ENCODE measurements at regions of chr2 and their contacts with region 1.

Region 1: GRCh38 chr2:168118733-168119514 is 128.5 kb downstream of the STK39 start:
- DNase-seq: no peak
- H3K4me3 ChIP-seq: no peak overlapping the region
- H3K27ac ChIP-seq: peak overlapping the region in 2 of 4 donors; percentile 13 to 28
- H3K4me1 ChIP-seq: peaks cover 8 to 14% (median 13%) of the 10 kb centered on the region in 4 donors
- H3K27me3 ChIP-seq: no peaks in the 10 kb centered on the region
- CTCF ChIP-seq: peak; percentile 64 to 66 (median 64)
- EP300 ChIP-seq: no peak
- POLR2A ChIP-seq: no peak

Region 2: GRCh38 chr2:166539340-166540162 is 1579.4 kb before region 1 on chr2:
- intact Hi-C with region 1: loop called (anchors 5 kb)
- DNase-seq: no peak
- H3K4me3 ChIP-seq: no peak overlapping the region
- H3K27ac ChIP-seq: no peak overlapping the region
- H3K4me1 ChIP-seq: peaks cover 0 to 7% (median 5%) of the 10 kb centered on the region in 4 donors
- H3K27me3 ChIP-seq: no peaks in the 10 kb centered on the region
- CTCF ChIP-seq: peak; percentile 53 to 84 (median 68)
- EP300 ChIP-seq: no peak
- POLR2A ChIP-seq: no peak

Region 3: GRCh38 chr2:167706800-167707199 is 412.1 kb before region 1 on chr2:
- intact Hi-C with region 1: no loop called
- DNase-seq: no peak
- H3K4me3 ChIP-seq: no peak overlapping the region
- H3K27ac ChIP-seq: no peak overlapping the region
- H3K4me1 ChIP-seq: no peaks in the 10 kb centered on the region
- H3K27me3 ChIP-seq: no peaks in the 10 kb centered on the region
- CTCF ChIP-seq: no peak
- EP300 ChIP-seq: no peak
- POLR2A ChIP-seq: no peak

Region 4: GRCh38 chr2:167966937-167967913 is 151.7 kb before region 1 on chr2:
- intact Hi-C with region 1: loop called (anchors 2 kb)
- DNase-seq: no peak
- H3K4me3 ChIP-seq: peak overlapping the region in 1 of 4 donors; percentile 8
- H3K27ac ChIP-seq: peak overlapping the region; percentile 53 to 69 (median 65)
- H3K4me1 ChIP-seq: peaks cover 0 to 36% (median 26%) of the 10 kb centered on the region in 4 donors
- H3K27me3 ChIP-seq: no peaks in the 10 kb centered on the region
- CTCF ChIP-seq: peak in 1 of 3 experiments; percentile 9
- EP300 ChIP-seq: no peak
- POLR2A ChIP-seq: no peak

Region 5: DNA sequence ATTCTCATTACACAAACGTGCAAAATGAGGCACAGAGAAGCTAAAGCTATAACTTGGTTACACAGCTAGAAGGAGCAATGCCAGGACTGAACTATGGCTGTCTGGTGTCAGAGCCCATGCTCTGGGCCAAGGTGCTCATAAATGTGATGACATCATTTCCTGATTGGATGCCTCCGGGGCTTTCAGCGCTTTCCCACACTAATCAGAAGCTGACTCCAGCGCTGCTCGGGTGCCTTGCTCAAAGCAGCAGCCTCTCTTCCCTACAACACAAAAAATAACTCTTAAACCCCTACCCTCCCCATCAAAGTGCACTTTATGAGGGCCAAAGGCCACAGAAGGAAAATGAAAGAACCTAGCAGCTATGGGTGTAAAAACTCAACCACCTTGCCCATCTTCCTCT is 37.7 kb after region 1 on chr2:
- intact Hi-C with region 1: no loop called
- DNase-seq: peak; percentile 53
- H3K4me3 ChIP-seq: no peak overlapping the region
- H3K27ac ChIP-seq: no peak overlapping the region
- H3K4me1 ChIP-seq: peaks cover 11 to 45% (median 36%) of the 10 kb centered on the region in 4 donors
- H3K27me3 ChIP-seq: no peaks in the 10 kb centered on the region
- CTCF ChIP-seq: no peak
- EP300 ChIP-seq: no peak
- POLR2A ChIP-seq: no peak

Region 6: GRCh38 chr2:168174756-168175155 is 55.8 kb after region 1 on chr2:
- intact Hi-C with region 1: no loop called
- DNase-seq: no peak
- H3K4me3 ChIP-seq: no peak overlapping the region
- H3K27ac ChIP-seq: no peak overlapping the region
- H3K4me1 ChIP-seq: peaks cover 0 to 39% (median 32%) of the 10 kb centered on the region in 4 donors
- H3K27me3 ChIP-seq: no peaks in the 10 kb centered on the region
- CTCF ChIP-seq: no peak
- EP300 ChIP-seq: no peak
- POLR2A ChIP-seq: no peak